Activated CD4-positive, alpha-beta T cell treated with anti-CD3 and anti-CD28 coated beads for 36 hours (primary cell): ENCODE measurements at regions of chrX and their contacts with region 1.

Region 1: DNA sequence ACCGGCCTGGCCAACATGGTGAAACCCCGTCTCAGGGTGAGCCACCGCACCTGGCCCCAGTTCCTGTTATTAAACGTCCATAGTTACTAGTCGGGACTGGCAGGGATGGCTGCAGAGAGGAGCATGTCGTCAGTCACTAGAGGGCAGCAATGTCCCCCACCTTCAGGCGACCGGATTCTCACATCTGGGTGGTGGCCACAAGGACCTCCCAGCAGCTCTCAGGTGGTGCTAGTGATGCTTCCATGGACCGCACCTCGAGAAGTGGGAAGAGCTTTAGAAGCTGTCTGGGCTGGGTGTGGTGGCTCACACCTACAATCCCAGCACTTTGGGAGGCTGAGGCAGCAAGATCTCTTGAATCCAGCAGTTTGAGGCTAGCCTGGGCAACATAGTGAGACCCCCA is 13.3 kb upstream of the IL3RA start:
- DNase-seq: peak; percentile 78
- ATAC-seq: peak; percentile 78
- H3K4me3 Mint-ChIP-seq: no peak overlapping the region
- H3K27ac Mint-ChIP-seq: peak overlapping the region; percentile 51
- H3K4me1 Mint-ChIP-seq: peaks cover 18% of the 10 kb centered on the region
- H3K27me3 Mint-ChIP-seq: peaks cover 8% of the 10 kb centered on the region

Region 2: DNA sequence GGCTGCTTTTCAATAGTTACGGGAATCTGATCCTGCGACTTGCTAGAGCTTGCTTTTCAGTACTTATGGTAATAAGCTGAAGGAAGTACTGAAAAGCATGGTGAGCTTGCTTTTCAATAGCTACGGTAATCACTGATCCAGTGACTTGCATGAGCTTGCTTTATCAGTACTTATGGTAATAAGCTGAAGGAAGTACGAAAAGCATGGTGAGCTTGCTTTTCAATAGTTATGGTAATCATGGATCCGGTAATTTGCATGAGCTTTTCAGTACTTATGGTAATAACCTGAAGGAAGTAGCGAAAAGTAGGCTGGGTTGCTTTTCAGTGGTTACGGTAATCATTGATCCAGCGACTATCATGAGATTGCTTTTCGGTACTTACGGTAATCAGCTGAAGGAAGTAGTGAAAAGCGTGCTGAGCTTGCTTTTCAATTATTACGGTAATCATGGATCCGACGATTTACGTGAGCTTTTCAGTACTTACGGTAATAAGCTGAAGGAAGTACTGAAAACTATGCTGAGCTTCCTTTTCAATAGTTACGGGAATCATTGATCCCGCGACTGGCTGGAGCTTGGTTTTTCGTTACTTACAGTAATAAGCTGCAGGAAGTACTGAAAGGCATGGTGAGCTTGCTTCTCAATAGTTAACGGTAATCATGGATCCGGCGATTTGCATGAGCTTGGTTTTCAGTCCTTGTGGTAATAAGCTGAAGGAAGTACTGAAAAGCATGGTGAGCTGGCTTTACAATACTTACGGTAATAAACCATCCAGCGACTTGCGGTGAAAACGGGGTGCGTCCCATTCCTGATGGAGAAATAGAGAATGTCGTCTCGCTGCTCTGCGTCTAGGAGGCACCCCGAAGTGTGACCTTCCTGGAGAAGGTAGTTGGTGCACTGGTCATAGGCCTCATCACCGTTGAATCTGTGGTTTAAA is 117.4 kb before region 1 on chrX:
- CTCF ChIA-PET with region 1: no interaction called
- POLR2A ChIA-PET with region 1: no interaction called
- intact Hi-C with region 1: loop called in 1 of 2 experiments (anchors 1 kb)
- DNase-seq: peak; percentile 46
- ATAC-seq: peak; percentile 53
- H3K4me3 Mint-ChIP-seq: peak overlapping the region; percentile 67
- H3K27ac Mint-ChIP-seq: peak overlapping the region; percentile 42
- H3K4me1 Mint-ChIP-seq: peaks cover 29% of the 10 kb centered on the region
- H3K27me3 Mint-ChIP-seq: peaks cover 4% of the 10 kb centered on the region

Region 3: GRCh38 chrX:1246816-1247215 is 76.5 kb before region 1 on chrX:
- CTCF ChIA-PET with region 1: no interaction called
- POLR2A ChIA-PET with region 1: no interaction called
- intact Hi-C with region 1: loop called (anchors 2 to 5 kb)
- DNase-seq: peak; percentile 91
- ATAC-seq: peak; percentile 33
- H3K4me3 Mint-ChIP-seq: no peak overlapping the region
- H3K27ac Mint-ChIP-seq: no peak overlapping the region
- H3K4me1 Mint-ChIP-seq: peaks cover 36% of the 10 kb centered on the region
- H3K27me3 Mint-ChIP-seq: no peaks in the 10 kb centered on the region

Region 4: GRCh38 chrX:1435241-1435895 is 112.1 kb after region 1 on chrX:
- CTCF ChIA-PET with region 1: no interaction called
- POLR2A ChIA-PET with region 1: no interaction called
- intact Hi-C with region 1: no loop called
- DNase-seq: no peak
- ATAC-seq: no peak
- H3K4me3 Mint-ChIP-seq: no peak overlapping the region
- H3K27ac Mint-ChIP-seq: no peak overlapping the region
- H3K4me1 Mint-ChIP-seq: no peaks in the 10 kb centered on the region
- H3K27me3 Mint-ChIP-seq: no peaks in the 10 kb centered on the region

Region 5: GRCh38 chrX:1580735-1581531 is 257.6 kb after region 1 on chrX:
- CTCF ChIA-PET with region 1: no interaction called
- POLR2A ChIA-PET with region 1: no interaction called
- intact Hi-C with region 1: loop called in 1 of 2 experiments (anchors 5 kb)
- DNase-seq: peak; percentile 90
- ATAC-seq: peak; percentile 78
- H3K4me3 Mint-ChIP-seq: no peak overlapping the region
- H3K27ac Mint-ChIP-seq: no peak overlapping the region
- H3K4me1 Mint-ChIP-seq: peaks cover 19% of the 10 kb centered on the region
- H3K27me3 Mint-ChIP-seq: no peaks in the 10 kb centered on the region

Region 6: GRCh38 chrX:2595258-2595657 is 1271.9 kb after region 1 on chrX:
- CTCF ChIA-PET with region 1: no interaction called
- POLR2A ChIA-PET with region 1: no interaction called
- intact Hi-C with region 1: loop called in 1 of 2 experiments (anchors 10 kb)
- DNase-seq: no peak
- ATAC-seq: no peak
- H3K4me3 Mint-ChIP-seq: no peak overlapping the region
- H3K27ac Mint-ChIP-seq: no peak overlapping the region
- H3K4me1 Mint-ChIP-seq: no peaks in the 10 kb centered on the region
- H3K27me3 Mint-ChIP-seq: no peaks in the 10 kb centered on the region